ENCODE measurements at regions of chr1 and their contacts with region 1.

Region 1: DNA sequence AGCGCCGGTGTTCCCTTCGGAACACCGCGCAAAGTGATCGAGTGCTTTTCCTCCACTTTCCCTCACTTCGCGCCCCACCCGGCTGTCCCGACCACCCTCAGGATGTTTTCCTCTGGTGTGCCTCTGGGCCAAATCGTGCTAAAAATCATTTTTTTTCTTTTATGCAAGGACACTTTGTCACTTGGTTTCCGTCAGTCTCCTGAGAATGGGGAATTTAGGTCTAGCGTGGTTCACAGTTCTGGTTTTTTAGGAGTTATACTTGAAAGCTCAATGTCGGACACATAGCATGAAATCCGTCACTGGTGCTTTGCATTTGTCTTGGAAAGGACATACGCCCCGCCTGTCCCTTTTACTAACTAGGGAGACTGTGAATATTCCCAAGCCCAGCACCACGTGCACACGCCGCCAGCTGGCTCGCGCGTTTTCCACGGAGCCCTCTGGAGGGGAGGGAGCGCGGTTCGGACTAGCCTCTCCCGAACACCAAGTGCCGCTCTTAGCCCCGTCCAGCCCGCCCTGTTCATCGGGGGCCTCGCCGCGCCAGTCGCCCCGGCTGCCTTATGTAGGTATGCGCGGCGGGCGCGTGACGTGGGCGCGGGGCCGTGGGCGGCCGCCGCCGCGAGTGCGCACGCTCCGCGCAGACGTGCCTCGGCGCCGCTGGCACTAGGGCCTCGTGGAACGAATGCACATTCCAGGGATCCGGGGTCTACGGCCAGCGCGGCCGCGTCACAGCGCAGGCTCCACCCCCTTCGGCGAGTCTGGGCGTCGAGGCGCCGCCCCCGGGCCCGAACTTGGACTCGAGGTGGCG is 572 bp upstream of the IRF2BP2 start:
- DNase-seq: peak; percentile 91
- CTCF ChIP-seq: no peak

Region 2: DNA sequence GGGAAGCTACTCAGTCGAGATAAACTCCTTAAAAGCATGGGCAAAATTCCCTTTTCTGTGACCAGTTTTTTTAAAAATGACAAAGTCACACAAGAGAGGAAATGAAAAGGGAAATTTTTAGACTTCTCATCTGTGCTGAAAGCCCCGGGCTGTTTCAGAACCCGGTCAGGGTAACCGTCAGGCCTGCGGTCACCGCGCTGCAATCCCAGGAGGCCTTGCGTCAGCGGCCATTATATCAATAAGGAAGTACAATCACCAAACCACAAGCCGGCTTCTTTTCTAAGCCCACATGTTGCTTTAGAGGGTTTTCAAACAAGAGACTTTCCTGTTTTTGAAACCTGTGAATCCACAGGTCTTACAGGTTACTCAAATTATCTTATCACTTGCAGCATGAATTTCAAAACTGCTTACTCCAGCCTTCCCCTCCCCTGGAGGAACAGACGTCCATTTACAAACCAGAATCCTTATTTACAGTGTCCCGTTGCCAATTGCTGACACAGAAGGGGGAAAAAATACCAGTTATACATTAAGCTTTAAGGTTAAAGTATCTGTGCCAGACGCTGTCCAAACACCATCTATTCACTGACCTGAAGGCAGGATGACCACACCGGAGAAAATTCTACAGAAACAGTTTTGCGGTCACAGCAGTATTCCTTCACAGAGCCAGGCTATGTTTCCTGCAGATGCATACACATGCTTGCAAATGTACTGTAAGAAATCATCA is 352.8 kb after region 1 on chr1:
- in situ Hi-C with region 1: loop called (anchors 25 kb)
- DNase-seq: peak; percentile 85
- CTCF ChIP-seq: no peak